Cardiac septum (tissue), 1 donor: ENCODE measurements at regions of chr2 and their contacts with region 1.

Region 1: GRCh38 chr2:21042958-21043743 is 722 bp downstream of the APOB start:
- DNase-seq: peak; percentile 83

Region 2: GRCh38 chr2:20888216-20888615 is 154.9 kb before region 1 on chr2:
- intact Hi-C with region 1: no loop called
- DNase-seq: no peak

Region 3: GRCh38 chr2:20966061-20966595 is 77.0 kb before region 1 on chr2:
- intact Hi-C with region 1: no loop called
- DNase-seq: peak; percentile 36

Region 4: GRCh38 chr2:21118302-21118920 is 75.3 kb after region 1 on chr2:
- intact Hi-C with region 1: loop called (anchors 2 kb)
- DNase-seq: no peak

Region 5: GRCh38 chr2:21317131-21317530 is 274.0 kb after region 1 on chr2:
- intact Hi-C with region 1: loop called (anchors 2 kb)
- DNase-seq: no peak